Naive thymus-derived CD4-positive, alpha-beta T cell (primary cell): ENCODE measurements at regions of chr17 and their contacts with region 1.

Region 1: DNA sequence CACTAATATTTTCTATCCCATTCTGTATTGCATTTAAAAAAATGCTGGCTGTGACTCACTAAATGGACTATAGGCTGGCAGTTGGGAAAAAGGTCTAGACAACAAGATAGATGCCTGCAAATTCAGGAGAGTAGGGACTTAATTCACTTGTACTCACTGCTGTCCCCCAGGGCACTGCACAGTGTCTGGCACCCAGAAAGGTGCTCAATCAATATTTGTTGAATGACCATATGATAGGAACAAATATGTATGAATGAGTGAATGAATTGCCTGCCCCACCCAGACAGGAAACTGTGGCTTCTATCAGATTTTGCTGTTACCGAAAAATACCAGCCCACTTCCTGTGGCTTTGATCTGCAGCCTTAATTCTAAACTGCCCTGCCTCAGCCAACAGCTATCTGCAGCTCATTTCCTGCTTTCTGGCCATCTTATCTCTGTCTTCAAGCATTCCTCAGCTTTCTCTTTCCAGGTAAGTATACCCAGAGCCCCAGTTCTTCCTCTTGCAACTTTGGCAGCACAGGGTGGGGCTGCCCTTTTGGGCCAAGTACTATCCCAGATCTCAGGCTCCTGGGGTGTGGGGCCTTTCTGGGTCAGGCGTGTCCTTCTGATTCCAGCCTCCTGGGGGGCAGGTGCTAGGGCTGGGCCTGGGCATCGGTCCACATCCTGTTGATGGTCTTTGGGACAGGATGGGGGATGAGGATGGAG is 15.3 kb upstream of the TNS4 start:
- DNase-seq: peak in 8 of 9 donors; percentile 69 to 88 (median 82)
- ATAC-seq: peak; percentile 85
- H3K4me3 ChIP-seq: peak overlapping the region; percentile 53
- H3K4me3 Mint-ChIP-seq: peak overlapping the region; percentile 60 to 89 (median 84)
- H3K27ac ChIP-seq: peak overlapping the region; percentile 10
- H3K27ac Mint-ChIP-seq: peak overlapping the region; percentile 21 to 97 (median 91)
- H3K4me1 ChIP-seq: peaks cover 47 to 55% of the 10 kb centered on the region in 2 donors
- H3K4me1 Mint-ChIP-seq: peaks cover 35 to 72% (median 67%) of the 10 kb centered on the region in 7 donors
- H3K27me3 ChIP-seq: no peaks in the 10 kb centered on the region
- H3K27me3 Mint-ChIP-seq: peaks cover 0 to 12% (median 0%) of the 10 kb centered on the region in 5 donors

Region 2: GRCh38 chr17:40427002-40427491 is 89.7 kb before region 1 on chr17:
- CTCF ChIA-PET with region 1: no interaction called
- POLR2A ChIA-PET with region 1: interaction called, 4 read pairs
- intact Hi-C with region 1: loop called in 1 of 2 experiments (anchors 5 kb)
- DNase-seq: peak in 6 of 9 donors; percentile 32 to 61 (median 54)
- ATAC-seq: peak; percentile 86
- H3K4me3 ChIP-seq: peak overlapping the region; percentile 31
- H3K4me3 Mint-ChIP-seq: peak overlapping the region; percentile 26 to 78 (median 70)
- H3K27ac ChIP-seq: no peak overlapping the region
- H3K27ac Mint-ChIP-seq: peak overlapping the region in 8 of 9 donors; percentile 6 to 86 (median 25)
- H3K4me1 ChIP-seq: peaks cover 24 to 25% of the 10 kb centered on the region in 2 donors
- H3K4me1 Mint-ChIP-seq: peaks cover 22 to 40% (median 30%) of the 10 kb centered on the region in 7 donors
- H3K27me3 ChIP-seq: no peaks in the 10 kb centered on the region
- H3K27me3 Mint-ChIP-seq: peaks cover 0 to 14% (median 0%) of the 10 kb centered on the region in 5 donors

Region 3: DNA sequence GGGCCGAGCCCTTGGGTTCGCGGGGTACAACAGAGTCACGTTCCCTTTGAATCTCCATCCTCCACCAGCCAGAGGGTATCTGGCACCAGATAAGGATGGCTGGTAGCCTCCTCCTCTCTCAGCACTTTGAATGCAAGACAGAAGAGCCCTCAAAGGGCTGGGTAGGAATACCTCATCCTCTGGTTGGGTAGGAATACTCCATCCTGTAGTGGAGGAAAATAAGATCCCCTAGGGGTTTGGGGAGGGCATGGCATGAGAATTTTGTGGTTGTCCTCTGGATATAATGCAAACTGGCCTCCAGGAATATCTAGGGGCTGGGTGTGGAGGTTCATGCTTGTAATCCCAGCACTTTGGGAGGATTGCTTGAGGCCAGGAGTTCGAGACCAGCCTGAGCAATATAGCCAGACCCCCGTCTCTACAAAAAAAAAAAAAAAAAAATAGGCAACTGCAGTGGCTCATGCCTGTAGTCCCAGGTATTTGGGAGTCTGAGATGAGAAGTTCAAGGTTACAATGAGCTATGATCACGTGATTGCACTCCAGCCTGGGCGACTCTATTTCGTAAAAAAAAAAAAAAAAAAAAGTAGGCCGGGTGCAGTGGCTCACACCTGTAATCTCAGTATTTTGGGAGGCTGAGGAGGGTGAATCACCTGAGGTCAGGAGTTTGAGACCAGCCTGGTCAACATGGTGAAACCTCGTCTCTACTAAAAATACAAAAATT is 70.8 kb before region 1 on chr17:
- CTCF ChIA-PET with region 1: no interaction called
- POLR2A ChIA-PET with region 1: no interaction called
- intact Hi-C with region 1: no loop called
- DNase-seq: no peak
- ATAC-seq: no peak
- H3K4me3 ChIP-seq: no peak overlapping the region
- H3K4me3 Mint-ChIP-seq: peak overlapping the region in 7 of 10 donors; percentile 12 to 90 (median 65)
- H3K27ac ChIP-seq: no peak overlapping the region
- H3K27ac Mint-ChIP-seq: peak overlapping the region in 3 of 9 donors; percentile 14 to 93 (median 79)
- H3K4me1 ChIP-seq: peaks cover 25 to 27% of the 10 kb centered on the region in 2 donors
- H3K4me1 Mint-ChIP-seq: peaks cover 31 to 60% (median 34%) of the 10 kb centered on the region in 7 donors
- H3K27me3 ChIP-seq: no peaks in the 10 kb centered on the region
- H3K27me3 Mint-ChIP-seq: peaks cover 0 to 5% (median 0%) of the 10 kb centered on the region in 5 donors

Region 4: DNA sequence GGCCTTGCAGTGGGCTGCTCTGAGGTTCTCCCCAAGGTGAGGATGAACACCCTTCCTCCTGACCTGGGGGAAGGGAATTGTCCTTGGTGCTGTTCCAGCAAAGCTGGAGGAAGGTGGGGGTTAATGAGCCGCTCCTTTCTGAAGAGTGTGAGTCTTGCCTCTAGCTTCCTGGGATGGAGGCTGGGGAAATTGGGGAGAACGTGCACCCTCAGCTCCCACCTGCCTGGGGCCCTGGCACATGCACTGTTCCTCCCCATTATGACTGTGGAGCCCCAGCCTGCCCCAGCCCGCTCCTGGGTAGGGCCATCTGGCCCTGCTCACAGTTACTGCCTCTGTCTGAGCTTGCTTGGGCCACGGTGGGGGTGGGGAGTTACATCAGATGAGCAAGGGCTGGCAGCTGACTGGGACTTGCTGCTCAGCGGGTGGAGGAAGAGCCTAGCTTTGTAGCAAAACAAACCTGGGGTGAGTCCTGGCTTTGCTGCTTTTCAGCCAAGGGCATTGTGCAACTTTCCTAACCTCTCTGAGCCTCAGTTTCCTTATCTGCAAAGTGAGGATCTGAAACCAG is 26.4 kb before region 1 on chr17:
- CTCF ChIA-PET with region 1: interaction called, 3 read pairs
- POLR2A ChIA-PET with region 1: interaction called, 10 read pairs
- intact Hi-C with region 1: loop called (anchors 2 kb)
- DNase-seq: peak in 1 of 9 donors; percentile 29
- ATAC-seq: no peak
- H3K4me3 ChIP-seq: no peak overlapping the region
- H3K4me3 Mint-ChIP-seq: peak overlapping the region in 9 of 10 donors; percentile 21 to 78 (median 62)
- H3K27ac ChIP-seq: no peak overlapping the region
- H3K27ac Mint-ChIP-seq: peak overlapping the region in 8 of 9 donors; percentile 14 to 90 (median 74)
- H3K4me1 ChIP-seq: peaks cover 20 to 27% of the 10 kb centered on the region in 2 donors
- H3K4me1 Mint-ChIP-seq: peaks cover 26 to 58% (median 49%) of the 10 kb centered on the region in 7 donors
- H3K27me3 ChIP-seq: no peaks in the 10 kb centered on the region
- H3K27me3 Mint-ChIP-seq: no peaks in the 10 kb centered on the region